Activated naive CD4-positive, alpha-beta T cell treated with anti-CD3 and anti-CD28 coated beads for 36 hours (primary cell): ENCODE measurements at regions of chr3 and their contacts with region 1.

Region 1: DNA sequence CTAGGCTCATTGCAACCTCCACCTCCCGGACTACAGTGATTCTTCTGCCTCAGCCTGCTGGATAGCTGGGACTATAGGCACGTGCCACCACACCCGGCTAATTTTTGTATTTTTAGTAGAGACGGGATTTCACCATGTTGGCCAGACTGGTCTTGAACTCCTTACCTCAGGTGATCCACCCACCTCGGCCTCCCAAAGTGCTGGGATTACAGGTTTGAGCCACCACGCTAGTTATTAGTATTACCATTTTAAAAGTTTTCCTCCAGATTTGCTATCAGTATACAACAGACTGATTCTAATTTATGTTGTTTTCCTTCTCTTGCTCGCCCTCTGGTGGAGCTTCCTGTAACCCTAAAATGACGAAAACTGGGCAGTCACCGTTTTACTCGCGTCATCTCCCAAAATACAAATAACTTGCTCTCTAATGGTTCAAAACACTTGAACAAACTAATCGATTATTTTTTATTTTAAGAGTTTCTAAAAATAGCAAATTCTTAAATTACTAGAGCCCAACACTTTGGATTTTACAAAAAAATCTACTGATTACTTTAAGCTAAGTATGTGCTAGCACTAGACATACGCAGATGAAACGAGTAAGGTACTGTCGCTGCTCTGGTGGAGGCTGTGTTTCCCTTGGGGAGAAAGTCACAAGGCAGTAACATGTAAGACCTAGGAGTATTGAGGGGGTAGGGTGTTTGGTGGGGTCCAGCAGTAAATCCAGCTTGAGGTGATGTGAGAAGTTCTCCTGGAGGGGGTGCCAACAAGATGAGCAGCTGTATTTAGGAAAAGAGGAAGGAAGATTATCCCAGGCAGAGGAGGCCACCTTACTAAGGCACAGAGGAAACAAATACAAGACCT is 203.3 kb downstream of the MBNL1 start:
- DNase-seq: peak; percentile 91
- H3K4me3 Mint-ChIP-seq: peak overlapping the region; percentile 35
- H3K27ac Mint-ChIP-seq: peak overlapping the region; percentile 38
- H3K4me1 Mint-ChIP-seq: peaks cover 6% of the 10 kb centered on the region
- H3K27me3 Mint-ChIP-seq: no peaks in the 10 kb centered on the region

Region 2: GRCh38 chr3:152026033-152026556 is 445.9 kb before region 1 on chr3:
- CTCF ChIA-PET with region 1: no interaction called
- intact Hi-C with region 1: loop called (anchors 1 kb)
- DNase-seq: no peak
- H3K4me3 Mint-ChIP-seq: no peak overlapping the region
- H3K27ac Mint-ChIP-seq: no peak overlapping the region
- H3K4me1 Mint-ChIP-seq: peaks cover 9% of the 10 kb centered on the region
- H3K27me3 Mint-ChIP-seq: peaks cover 1% of the 10 kb centered on the region

Region 3: DNA sequence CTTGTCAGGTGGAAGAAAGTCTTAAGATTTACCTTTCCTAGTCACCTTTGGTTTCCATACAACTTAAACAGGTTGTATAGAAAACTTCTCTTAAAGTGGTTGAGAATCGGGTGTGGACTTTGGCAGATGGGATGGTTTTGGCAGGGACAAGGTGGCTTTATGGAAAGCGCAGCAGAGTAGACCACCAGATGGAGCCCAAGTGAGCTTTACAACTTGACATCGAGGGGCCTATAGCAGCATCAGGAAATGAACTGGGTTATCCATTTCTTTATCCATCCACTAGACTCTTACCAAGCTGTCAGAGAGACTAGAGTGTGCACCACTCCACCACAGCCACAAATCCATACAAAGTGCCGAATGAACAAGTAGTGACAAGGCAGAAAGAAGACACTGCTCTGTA is 288.6 kb before region 1 on chr3:
- CTCF ChIA-PET with region 1: interaction called, 6 read pairs
- intact Hi-C with region 1: loop called (anchors 1 kb)
- DNase-seq: peak; percentile 80
- H3K4me3 Mint-ChIP-seq: peak overlapping the region; percentile 46
- H3K27ac Mint-ChIP-seq: peak overlapping the region; percentile 28
- H3K4me1 Mint-ChIP-seq: peaks cover 81% of the 10 kb centered on the region
- H3K27me3 Mint-ChIP-seq: no peaks in the 10 kb centered on the region

Region 4: GRCh38 chr3:152444029-152444641 is 27.9 kb before region 1 on chr3:
- CTCF ChIA-PET with region 1: interaction called, 5 read pairs
- intact Hi-C with region 1: loop called (anchors 1 kb)
- DNase-seq: no peak
- H3K4me3 Mint-ChIP-seq: no peak overlapping the region
- H3K27ac Mint-ChIP-seq: peak overlapping the region; percentile 56
- H3K4me1 Mint-ChIP-seq: peaks cover 68% of the 10 kb centered on the region
- H3K27me3 Mint-ChIP-seq: no peaks in the 10 kb centered on the region

Region 5: DNA sequence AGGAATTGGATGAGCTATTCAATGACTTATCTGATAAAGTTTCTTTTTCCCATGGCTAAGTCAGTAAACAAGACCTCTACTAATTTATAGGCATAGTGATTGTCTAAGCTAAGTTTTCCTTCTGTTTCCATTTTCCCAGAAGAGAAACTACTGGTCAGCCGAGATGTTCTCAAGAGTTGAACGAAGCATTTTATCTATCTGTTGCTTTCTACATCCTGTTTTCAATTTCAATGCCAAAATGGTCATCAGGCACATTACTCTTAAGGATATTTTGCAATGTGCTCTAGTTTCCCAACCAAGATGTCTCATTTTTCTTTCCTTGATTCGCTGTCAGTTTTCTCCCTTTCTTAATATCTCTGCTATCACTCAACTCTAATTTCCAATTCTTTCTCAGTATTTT is 25.4 kb after region 1 on chr3:
- CTCF ChIA-PET with region 1: no interaction called
- intact Hi-C with region 1: no loop called
- DNase-seq: no peak
- H3K4me3 Mint-ChIP-seq: no peak overlapping the region
- H3K27ac Mint-ChIP-seq: no peak overlapping the region
- H3K4me1 Mint-ChIP-seq: peaks cover 11% of the 10 kb centered on the region
- H3K27me3 Mint-ChIP-seq: no peaks in the 10 kb centered on the region

Region 6: DNA sequence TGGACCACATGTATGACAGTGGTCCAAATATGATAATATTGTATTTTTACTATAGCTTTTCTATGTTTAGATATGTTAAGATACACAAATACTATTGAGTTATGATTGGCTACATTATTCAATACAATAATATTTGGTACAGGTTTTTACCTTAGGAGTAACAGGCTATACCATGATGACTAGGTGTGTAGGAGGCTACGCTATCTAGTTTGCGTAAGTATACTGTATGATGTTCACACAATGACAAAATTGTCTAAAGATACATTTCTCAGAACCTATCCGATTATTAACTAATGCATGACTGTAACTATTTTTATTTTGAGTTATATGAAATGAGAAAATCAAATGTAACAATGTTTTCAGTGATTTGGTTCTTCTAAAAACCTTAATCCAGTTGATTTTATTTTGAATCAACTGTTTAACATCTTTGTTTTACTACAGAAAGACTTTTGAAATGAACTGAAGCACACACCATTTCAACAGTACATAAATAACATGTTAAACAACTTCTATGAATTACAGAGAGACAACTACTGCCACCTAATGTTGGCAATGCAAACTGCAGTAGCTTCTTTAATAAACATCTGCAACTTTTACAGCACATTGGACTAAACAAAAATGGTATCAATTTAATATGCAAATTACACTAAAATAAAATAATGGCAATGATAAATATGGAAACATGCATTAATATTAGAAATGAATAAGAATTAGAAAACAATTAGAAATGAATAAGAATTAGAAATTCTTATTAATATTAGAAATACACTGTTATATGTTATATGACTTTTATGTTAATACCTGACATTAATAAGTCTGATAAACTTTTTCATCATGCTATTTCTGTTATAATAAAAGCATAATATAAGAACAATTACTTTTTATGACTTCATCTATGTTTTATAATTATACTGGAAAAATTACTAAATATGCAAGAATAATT is 52.4 kb after region 1 on chr3:
- CTCF ChIA-PET with region 1: interaction called, 19 read pairs
- intact Hi-C with region 1: loop called (anchors 1 kb)
- DNase-seq: peak; percentile 74
- H3K4me3 Mint-ChIP-seq: no peak overlapping the region
- H3K27ac Mint-ChIP-seq: no peak overlapping the region
- H3K4me1 Mint-ChIP-seq: no peaks in the 10 kb centered on the region
- H3K27me3 Mint-ChIP-seq: no peaks in the 10 kb centered on the region

Region 7: DNA sequence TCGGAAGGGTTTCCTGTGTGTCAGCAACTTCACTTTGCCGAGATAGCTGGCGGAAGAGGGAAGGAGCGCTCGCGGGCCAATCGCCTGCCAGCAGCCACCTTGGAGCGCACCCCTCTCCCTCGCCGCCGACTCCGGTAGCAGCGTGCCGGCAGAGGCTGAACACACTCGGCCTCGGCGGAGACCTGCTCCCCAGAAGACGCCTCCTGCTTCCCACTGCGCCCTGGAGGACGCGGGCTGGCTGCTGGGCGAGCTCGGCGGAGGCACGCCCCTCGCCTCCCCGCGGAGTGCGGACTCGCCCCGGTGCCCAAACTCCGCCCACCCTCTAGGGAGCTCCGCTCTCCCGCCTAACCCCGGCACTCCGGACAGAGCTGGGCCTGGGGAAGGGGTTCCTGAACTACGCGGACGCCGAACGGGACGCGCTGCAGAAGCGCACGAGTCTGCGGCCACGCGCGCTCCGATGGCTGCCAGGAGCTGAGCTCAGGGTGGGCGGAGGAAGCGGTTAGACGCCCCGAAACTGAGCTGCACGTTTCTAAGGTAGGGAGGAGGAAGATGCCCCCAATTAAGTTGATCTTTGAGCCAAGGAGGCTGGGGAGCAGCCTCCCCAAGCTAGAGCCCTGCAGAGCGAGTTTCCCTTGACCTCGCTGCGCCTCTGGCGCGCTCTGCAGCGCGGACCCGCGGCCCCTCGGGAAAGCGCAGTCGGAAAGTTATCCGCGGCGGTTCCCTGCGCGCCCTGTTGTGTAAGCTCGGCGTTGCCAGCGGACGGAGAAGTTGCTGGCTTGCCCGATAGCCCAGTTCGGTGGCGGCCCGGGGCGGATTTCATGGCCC is 362.9 kb after region 1 on chr3 and contains the start of gene P2RY1:
- CTCF ChIA-PET with region 1: no interaction called
- intact Hi-C with region 1: loop called (anchors 2 kb)
- DNase-seq: peak; percentile 46
- H3K4me3 Mint-ChIP-seq: peak within 1 kb of the TSS; percentile 75
- H3K27ac Mint-ChIP-seq: peak within 1 kb of the TSS; percentile 42
- H3K4me1 Mint-ChIP-seq: peaks cover 8% of the 10 kb centered on the region
- H3K27me3 Mint-ChIP-seq: peaks cover 27% of the 10 kb centered on the region
- total RNA-seq, gene P2RY1: 0.67 to 0.74 TPM